Activated T-helper 1 cell treated with anti-CD3 and anti-CD28 coated beads, Interleukin-12 subunit alpha, Interleukin-12 subunit beta, Interleukin-2, Interleukin-4 antibody, amounts not matched to agents 30 ng/mL and 10 ng/mL and 1 ng/mL, durations not matched to agents 14 hours and 24 hours and 36 hours (primary cell): ENCODE measurements at regions of chr1 and their contacts with region 1.

Region 1: DNA sequence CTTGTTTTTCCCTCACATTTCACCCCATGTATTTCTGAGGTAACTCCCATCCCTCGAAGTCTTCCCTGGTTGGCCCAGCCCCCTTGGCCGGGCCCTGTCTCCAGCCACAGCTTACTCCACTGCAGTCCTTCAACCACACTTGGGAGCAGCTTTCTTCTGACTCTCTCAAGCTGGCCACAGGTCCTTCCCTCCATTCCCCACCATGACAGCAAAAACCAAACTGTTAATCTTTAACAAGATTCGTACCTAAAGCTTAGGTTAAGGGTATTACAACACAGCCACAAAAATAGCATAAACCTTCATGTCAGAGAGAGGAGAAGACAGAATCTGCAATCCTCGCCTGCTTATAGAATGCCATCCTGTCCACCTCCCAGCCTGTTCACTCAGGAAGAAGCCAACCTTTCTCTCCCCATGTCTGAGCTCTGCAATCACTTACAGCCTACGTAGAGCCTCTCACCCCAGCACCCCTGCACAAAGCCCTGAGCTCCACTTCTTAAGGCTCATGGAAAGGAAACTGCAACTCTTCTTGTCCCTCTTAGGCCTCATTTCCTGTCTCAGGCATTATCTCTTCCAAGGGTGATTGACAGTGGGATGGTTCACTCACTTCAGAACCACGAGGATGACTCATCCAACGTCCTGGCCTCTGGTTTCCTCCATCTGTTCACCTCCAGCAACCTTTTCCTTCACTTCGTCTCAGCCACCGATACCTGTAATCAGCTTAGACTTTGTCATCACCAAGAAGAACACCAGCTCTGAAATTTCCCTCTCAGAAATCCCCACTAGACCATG is 72.8 kb downstream of the CD2 start:
- DNase-seq: peak; percentile 75
- H3K4me3 Mint-ChIP-seq: peak overlapping the region; percentile 70
- H3K27ac Mint-ChIP-seq: peak overlapping the region; percentile 95
- H3K4me1 Mint-ChIP-seq: peaks cover 74% of the 10 kb centered on the region
- H3K27me3 Mint-ChIP-seq: no peaks in the 10 kb centered on the region

Region 2: GRCh38 chr1:116504308-116505156 is 322.5 kb before region 1 on chr1:
- intact Hi-C with region 1: loop called (anchors 5 kb)
- DNase-seq: peak; percentile 86
- H3K4me3 Mint-ChIP-seq: peak overlapping the region; percentile 3
- H3K27ac Mint-ChIP-seq: peak overlapping the region; percentile 88
- H3K4me1 Mint-ChIP-seq: peaks cover 91% of the 10 kb centered on the region
- H3K27me3 Mint-ChIP-seq: no peaks in the 10 kb centered on the region

Region 3: GRCh38 chr1:116763787-116764465 is 63.1 kb before region 1 on chr1:
- intact Hi-C with region 1: loop called (anchors 1 kb)
- DNase-seq: peak; percentile 50
- H3K4me3 Mint-ChIP-seq: peak overlapping the region; percentile 84
- H3K27ac Mint-ChIP-seq: peak overlapping the region; percentile 100
- H3K4me1 Mint-ChIP-seq: peaks cover 95% of the 10 kb centered on the region
- H3K27me3 Mint-ChIP-seq: peaks cover 3% of the 10 kb centered on the region

Region 4: DNA sequence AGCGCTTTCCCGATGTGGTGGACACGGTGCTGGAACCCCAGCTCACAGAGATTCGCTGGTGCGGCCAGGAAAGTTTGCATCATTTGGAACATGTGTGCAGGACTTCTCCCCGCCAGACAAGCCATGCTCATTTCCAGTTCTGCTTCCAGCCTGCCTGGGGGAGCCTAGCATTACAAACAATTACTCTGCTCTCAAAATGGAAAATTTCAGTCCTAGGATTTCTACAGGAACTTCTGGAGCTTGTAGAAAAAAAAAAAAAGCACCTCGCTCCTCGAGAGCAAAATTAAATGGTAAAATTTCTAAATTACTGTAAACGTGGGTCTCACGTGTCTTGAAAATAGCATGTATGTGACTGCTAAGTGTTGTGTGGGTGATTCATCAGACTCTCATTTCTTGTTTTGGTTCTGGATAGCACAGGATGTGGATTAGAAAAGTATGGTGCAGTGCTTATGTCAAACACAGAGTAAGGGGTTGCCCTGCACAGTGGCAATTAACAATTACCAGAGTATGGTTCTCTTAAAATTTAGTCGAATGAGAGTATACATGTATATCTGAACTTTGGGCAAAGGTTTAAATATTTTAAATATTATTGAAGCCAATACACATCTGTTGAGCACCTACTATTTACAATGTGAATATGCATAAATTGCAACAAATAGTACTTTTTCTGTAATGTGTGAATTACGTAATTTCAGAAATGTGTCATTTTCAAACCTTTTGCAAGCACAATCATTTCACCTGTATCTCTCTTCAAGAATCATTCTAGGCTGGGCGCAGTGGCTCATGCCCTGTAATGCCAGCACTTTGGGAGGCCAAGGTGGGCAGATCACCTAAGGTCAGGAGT is 20.9 kb after region 1 on chr1:
- intact Hi-C with region 1: loop called (anchors 1 kb)
- DNase-seq: no peak
- H3K4me3 Mint-ChIP-seq: no peak overlapping the region
- H3K27ac Mint-ChIP-seq: peak overlapping the region; percentile 38
- H3K4me1 Mint-ChIP-seq: peaks cover 34% of the 10 kb centered on the region
- H3K27me3 Mint-ChIP-seq: no peaks in the 10 kb centered on the region

Region 5: GRCh38 chr1:116878804-116879477 is 51.9 kb after region 1 on chr1:
- intact Hi-C with region 1: loop called (anchors 1 kb)
- DNase-seq: no peak
- H3K4me3 Mint-ChIP-seq: no peak overlapping the region
- H3K27ac Mint-ChIP-seq: no peak overlapping the region
- H3K4me1 Mint-ChIP-seq: peaks cover 21% of the 10 kb centered on the region
- H3K27me3 Mint-ChIP-seq: no peaks in the 10 kb centered on the region

Region 6: GRCh38 chr1:116971965-116972675 is 145.1 kb after region 1 on chr1:
- intact Hi-C with region 1: no loop called
- DNase-seq: no peak
- H3K4me3 Mint-ChIP-seq: no peak overlapping the region
- H3K27ac Mint-ChIP-seq: no peak overlapping the region
- H3K4me1 Mint-ChIP-seq: no peaks in the 10 kb centered on the region
- H3K27me3 Mint-ChIP-seq: no peaks in the 10 kb centered on the region

Region 7: GRCh38 chr1:116987256-116987555 is 160.2 kb after region 1 on chr1:
- intact Hi-C with region 1: loop called (anchors 2 kb)
- DNase-seq: peak; percentile 48
- H3K4me3 Mint-ChIP-seq: peak overlapping the region; percentile 80
- H3K27ac Mint-ChIP-seq: peak overlapping the region; percentile 92
- H3K4me1 Mint-ChIP-seq: peaks cover 49% of the 10 kb centered on the region
- H3K27me3 Mint-ChIP-seq: no peaks in the 10 kb centered on the region

Region 8: GRCh38 chr1:117093091-117093534 is 266.1 kb after region 1 on chr1:
- intact Hi-C with region 1: no loop called
- DNase-seq: no peak
- H3K4me3 Mint-ChIP-seq: no peak overlapping the region
- H3K27ac Mint-ChIP-seq: peak overlapping the region; percentile 61
- H3K4me1 Mint-ChIP-seq: peaks cover 23% of the 10 kb centered on the region
- H3K27me3 Mint-ChIP-seq: no peaks in the 10 kb centered on the region